ENCODE measurements at regions of chr5 and their contacts with region 1.

Region 1: DNA sequence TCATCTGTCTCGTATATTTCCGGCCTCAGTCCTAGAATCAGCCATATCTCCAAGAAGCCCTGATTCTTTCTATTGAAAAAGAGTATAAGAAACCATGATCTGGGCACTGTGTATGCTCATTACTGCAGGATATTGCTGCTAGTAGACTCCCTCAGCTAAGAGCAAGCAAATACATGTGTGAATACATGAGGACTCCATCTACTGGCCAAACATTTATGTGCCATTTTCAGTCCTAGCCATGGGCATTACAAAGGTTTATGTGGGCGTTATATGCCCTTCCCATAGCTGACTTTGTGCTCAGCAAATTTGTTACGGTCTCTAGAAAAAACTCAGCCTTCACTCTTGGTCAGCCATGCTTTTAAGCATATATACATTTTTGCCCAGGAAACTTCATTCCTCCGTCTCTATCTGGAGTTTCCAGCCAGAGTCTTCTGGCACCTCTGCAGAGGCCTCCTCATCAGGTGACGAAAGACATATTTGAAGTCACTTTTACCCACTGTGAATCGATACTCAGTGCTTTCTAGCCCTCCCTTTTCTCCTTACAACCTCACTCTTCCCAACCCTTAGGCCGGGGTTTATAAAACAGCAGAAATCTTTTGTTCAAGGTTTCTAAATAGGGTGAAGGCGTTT is 1495.6 kb upstream of the CDH6 start:
- DNase-seq: no peak
- ATAC-seq: peak; percentile 75
- H3K4me3 ChIP-seq: no peak overlapping the region
- H3K27ac ChIP-seq: no peak overlapping the region
- H3K4me1 ChIP-seq: no peaks in the 10 kb centered on the region
- H3K27me3 ChIP-seq: no peaks in the 10 kb centered on the region
- CTCF ChIP-seq: peak in 2 of 3 experiments; percentile 19 to 46; a peak in 2 of 6 replicates
- EP300 ChIP-seq: no peak
- POLR2A ChIP-seq: no peak
- RAD21 ChIP-seq: no peak

Region 2: DNA sequence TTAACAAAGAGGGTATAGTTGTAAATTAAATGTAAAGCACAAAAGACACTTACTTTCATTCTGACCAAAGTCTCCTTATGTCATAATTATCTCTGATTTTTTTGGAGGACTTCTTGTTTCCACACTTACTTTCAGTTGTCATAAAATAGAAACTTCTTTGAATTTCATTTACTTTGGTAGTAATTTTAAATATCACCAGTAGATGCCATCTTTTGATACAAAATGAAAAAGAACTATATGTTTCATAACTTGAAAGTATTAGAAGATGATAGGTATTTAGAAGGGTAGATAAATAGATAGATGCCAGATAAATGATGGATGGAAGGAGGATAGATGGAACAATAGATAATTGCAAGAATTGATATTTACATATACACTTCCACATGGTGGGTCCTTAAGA is 794.3 kb before region 1 on chr5:
- CTCF ChIA-PET with region 1: no interaction called
- POLR2A ChIA-PET with region 1: no interaction called
- RAD21 ChIA-PET with region 1: no interaction called
- SMC1A ChIA-PET with region 1: no interaction called
- in situ Hi-C with region 1: no loop called
- intact Hi-C with region 1: loop called (anchors 5 kb)
- DNase-seq: no peak
- ATAC-seq: no peak
- H3K4me3 ChIP-seq: no peak overlapping the region
- H3K27ac ChIP-seq: no peak overlapping the region
- H3K4me1 ChIP-seq: no peaks in the 10 kb centered on the region
- H3K27me3 ChIP-seq: no peaks in the 10 kb centered on the region
- CTCF ChIP-seq: no peak; a peak in 1 of 6 replicates
- EP300 ChIP-seq: no peak
- POLR2A ChIP-seq: no peak
- RAD21 ChIP-seq: no peak

Region 3: DNA sequence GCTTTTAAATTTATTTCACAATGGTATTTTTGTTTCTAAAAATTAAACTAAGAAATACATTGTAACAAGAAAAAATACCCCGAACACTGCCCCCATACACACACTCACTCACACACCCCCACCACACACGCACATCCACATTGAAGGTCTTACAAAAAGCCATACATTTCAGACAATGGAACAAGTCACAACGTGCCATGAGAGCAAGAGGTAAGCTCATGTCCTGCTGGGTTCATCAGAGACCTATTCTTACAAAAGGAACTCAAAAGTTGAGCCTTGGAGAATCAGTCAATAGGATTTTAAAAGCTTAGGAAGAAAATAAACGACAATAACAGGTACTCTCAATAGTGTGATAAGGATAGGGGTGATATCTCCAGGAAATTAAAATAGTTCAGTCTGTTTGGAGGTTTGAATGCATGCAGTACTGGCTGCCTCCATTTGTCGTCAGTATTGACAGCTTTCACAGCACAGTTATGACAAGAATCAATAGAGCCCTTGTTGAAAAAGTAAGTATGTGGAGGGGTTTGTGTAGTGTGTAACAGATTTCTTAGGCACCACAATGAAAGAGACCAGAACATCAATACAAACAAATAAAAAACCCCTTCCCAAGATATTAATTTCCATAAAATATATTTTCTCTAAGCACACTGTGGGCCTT is 330.6 kb before region 1 on chr5:
- CTCF ChIA-PET with region 1: interaction called, 13 read pairs
- POLR2A ChIA-PET with region 1: no interaction called
- RAD21 ChIA-PET with region 1: no interaction called
- SMC1A ChIA-PET with region 1: interaction called, 3 read pairs
- in situ Hi-C with region 1: no loop called
- intact Hi-C with region 1: loop called (anchors 5 kb)
- DNase-seq: no peak
- ATAC-seq: 0 out of 3 replicates have a peak, but pooled peaks have one; percentile 32
- H3K4me3 ChIP-seq: no peak overlapping the region
- H3K27ac ChIP-seq: no peak overlapping the region
- H3K4me1 ChIP-seq: no peaks in the 10 kb centered on the region
- H3K27me3 ChIP-seq: no peaks in the 10 kb centered on the region
- CTCF ChIP-seq: peak in 2 of 3 experiments; percentile 10 to 25; a peak in 2 of 6 replicates
- EP300 ChIP-seq: no peak
- POLR2A ChIP-seq: no peak
- RAD21 ChIP-seq: no peak

Measured in GM12878 (cell line).